Heart left ventricle (tissue), 16 donors: ENCODE measurements at regions of chr4 and their contacts with region 1.

Region 1: GRCh38 chr4:184395971-184396391 is 78.4 kb downstream of the IRF2 start:
- DNase-seq: no peak
- ATAC-seq: no peak
- H3K4me3 ChIP-seq: no peak overlapping the region
- H3K27ac ChIP-seq: peak overlapping the region; percentile 27 to 92 (median 70)
- H3K4me1 ChIP-seq: peaks cover 6 to 88% (median 34%) of the 10 kb centered on the region in 12 donors
- H3K27me3 ChIP-seq: no peaks in the 10 kb centered on the region
- CTCF ChIP-seq: no peak
- POLR2A ChIP-seq: no peak

Region 2: DNA sequence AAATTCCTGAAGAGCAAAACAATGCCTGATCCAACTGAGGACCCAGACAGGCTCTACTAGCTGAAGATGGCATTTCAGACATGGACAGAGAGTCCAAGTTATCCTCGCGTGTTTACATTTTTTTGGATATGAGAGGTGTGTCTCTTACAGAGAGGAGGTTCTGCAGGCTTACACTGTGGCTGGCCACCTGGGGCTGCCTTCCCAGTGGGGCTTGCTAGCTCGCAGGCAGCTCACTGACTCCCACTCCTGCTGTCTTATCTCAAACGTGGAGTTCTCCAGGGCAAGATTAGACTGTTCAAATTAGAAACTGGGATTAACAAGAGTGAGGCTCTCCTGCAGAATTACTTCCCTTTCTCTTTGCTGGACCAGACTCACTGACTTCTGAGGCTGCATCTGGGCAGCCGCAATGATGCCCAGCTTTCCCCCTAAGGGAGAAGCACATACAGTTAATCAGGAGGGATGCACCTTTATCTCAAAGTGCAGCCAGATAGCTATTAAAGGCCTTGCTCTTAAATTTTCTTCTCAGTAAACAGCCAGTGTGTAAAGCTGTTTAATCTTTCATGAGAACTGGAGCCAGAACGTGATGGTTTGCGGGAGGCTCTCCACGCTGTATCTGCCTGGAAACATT is 301.3 kb before region 1 on chr4:
- intact Hi-C with region 1: no loop called
- DNase-seq: no peak
- ATAC-seq: no peak
- H3K4me3 ChIP-seq: no peak overlapping the region
- H3K27ac ChIP-seq: no peak overlapping the region
- H3K4me1 ChIP-seq: peaks cover 0 to 19% (median 5%) of the 10 kb centered on the region in 12 donors
- H3K27me3 ChIP-seq: no peaks in the 10 kb centered on the region
- CTCF ChIP-seq: no peak
- POLR2A ChIP-seq: no peak

Region 3: GRCh38 chr4:184282251-184282713 is 113.7 kb before region 1 on chr4:
- intact Hi-C with region 1: loop called in 1 of 10 experiments (anchors 10 kb)
- DNase-seq: no peak
- ATAC-seq: peak in 3 of 4 donors; percentile 56 to 71 (median 65)
- H3K4me3 ChIP-seq: no peak overlapping the region
- H3K27ac ChIP-seq: peak overlapping the region in 4 of 12 donors; percentile 17 to 39 (median 26)
- H3K4me1 ChIP-seq: peaks cover 0 to 33% (median 6%) of the 10 kb centered on the region in 12 donors
- H3K27me3 ChIP-seq: no peaks in the 10 kb centered on the region
- CTCF ChIP-seq: peak in 2 of 12 donors; percentile 18 to 25
- POLR2A ChIP-seq: no peak

Region 4: GRCh38 chr4:184343502-184344177 is 52.3 kb before region 1 on chr4:
- intact Hi-C with region 1: loop called in 1 of 10 experiments (anchors 5 kb)
- DNase-seq: peak; percentile 75 to 85 (median 83)
- ATAC-seq: peak; percentile 75 to 84 (median 76)
- H3K4me3 ChIP-seq: peak overlapping the region; percentile 31 to 77 (median 62)
- H3K27ac ChIP-seq: peak overlapping the region in 11 of 12 donors; percentile 71 to 94 (median 85)
- H3K4me1 ChIP-seq: peaks cover 8 to 71% (median 47%) of the 10 kb centered on the region in 12 donors
- H3K27me3 ChIP-seq: no peaks in the 10 kb centered on the region
- CTCF ChIP-seq: no peak
- POLR2A ChIP-seq: no peak